ENCODE measurements at regions of chr17 and their contacts with region 1.

Region 1: GRCh38 chr17:63946440-63947367 is 14.6 kb upstream of the CD79B start:
- DNase-seq: peak; percentile 45 to 84
- ATAC-seq: peak; percentile 58 to 88; a peak in 5 of 6 replicates
- H3K4me3 ChIP-seq: no peak overlapping the region
- H3K27ac ChIP-seq: no peak overlapping the region
- H3K4me1 ChIP-seq: no peaks in the 10 kb centered on the region
- CTCF ChIP-seq: peak; percentile 77
- EP300 ChIP-seq: no peak
- POLR2A ChIP-seq: no peak
- RAD21 ChIP-seq: peak; percentile 51 to 57

Region 2: DNA sequence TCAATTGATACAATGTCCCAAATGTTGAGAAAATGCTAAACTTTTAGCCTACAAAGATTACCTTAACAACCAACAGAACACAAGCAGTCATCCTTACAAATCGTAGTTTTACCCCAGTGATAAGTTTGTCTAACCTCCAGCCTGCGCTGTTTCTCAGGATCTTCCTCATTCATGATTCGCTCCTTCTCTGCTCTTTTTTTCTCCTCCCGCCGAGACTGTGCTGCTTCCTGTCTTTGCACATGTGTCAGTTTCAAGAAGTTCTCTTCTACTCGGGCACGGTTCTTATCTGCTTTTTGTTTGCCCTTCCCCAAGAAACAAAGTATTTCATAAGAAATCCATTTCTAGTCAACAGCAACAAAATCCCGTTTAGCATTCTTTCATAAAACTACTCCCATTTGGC is 194.9 kb before region 1 on chr17:
- CTCF ChIA-PET with region 1: no interaction called
- POLR2A ChIA-PET with region 1: no interaction called
- DNase-seq: no peak
- ATAC-seq: no peak
- H3K4me3 ChIP-seq: no peak overlapping the region
- H3K27ac ChIP-seq: no peak overlapping the region
- H3K4me1 ChIP-seq: no peaks in the 10 kb centered on the region
- CTCF ChIP-seq: no peak
- EP300 ChIP-seq: no peak
- POLR2A ChIP-seq: no peak
- RAD21 ChIP-seq: no peak

Region 3: GRCh38 chr17:63904316-63904715 is 42.4 kb before region 1 on chr17:
- CTCF ChIA-PET with region 1: interaction called, 36 read pairs
- POLR2A ChIA-PET with region 1: no interaction called
- DNase-seq: no peak
- ATAC-seq: no peak
- H3K4me3 ChIP-seq: no peak overlapping the region
- H3K27ac ChIP-seq: no peak overlapping the region
- H3K4me1 ChIP-seq: no peaks in the 10 kb centered on the region; the same call in 2 of the 3 replicates
- CTCF ChIP-seq: no peak
- EP300 ChIP-seq: no peak
- POLR2A ChIP-seq: no peak
- RAD21 ChIP-seq: no peak

Region 4: GRCh38 chr17:63925645-63926044 is 21.1 kb before region 1 on chr17:
- CTCF ChIA-PET with region 1: interaction called, 105 read pairs
- POLR2A ChIA-PET with region 1: no interaction called
- DNase-seq: no peak
- ATAC-seq: no peak
- H3K4me3 ChIP-seq: no peak overlapping the region
- H3K27ac ChIP-seq: no peak overlapping the region
- H3K4me1 ChIP-seq: no peaks in the 10 kb centered on the region
- CTCF ChIP-seq: no peak
- EP300 ChIP-seq: no peak
- POLR2A ChIP-seq: no peak
- RAD21 ChIP-seq: no peak

Region 5: DNA sequence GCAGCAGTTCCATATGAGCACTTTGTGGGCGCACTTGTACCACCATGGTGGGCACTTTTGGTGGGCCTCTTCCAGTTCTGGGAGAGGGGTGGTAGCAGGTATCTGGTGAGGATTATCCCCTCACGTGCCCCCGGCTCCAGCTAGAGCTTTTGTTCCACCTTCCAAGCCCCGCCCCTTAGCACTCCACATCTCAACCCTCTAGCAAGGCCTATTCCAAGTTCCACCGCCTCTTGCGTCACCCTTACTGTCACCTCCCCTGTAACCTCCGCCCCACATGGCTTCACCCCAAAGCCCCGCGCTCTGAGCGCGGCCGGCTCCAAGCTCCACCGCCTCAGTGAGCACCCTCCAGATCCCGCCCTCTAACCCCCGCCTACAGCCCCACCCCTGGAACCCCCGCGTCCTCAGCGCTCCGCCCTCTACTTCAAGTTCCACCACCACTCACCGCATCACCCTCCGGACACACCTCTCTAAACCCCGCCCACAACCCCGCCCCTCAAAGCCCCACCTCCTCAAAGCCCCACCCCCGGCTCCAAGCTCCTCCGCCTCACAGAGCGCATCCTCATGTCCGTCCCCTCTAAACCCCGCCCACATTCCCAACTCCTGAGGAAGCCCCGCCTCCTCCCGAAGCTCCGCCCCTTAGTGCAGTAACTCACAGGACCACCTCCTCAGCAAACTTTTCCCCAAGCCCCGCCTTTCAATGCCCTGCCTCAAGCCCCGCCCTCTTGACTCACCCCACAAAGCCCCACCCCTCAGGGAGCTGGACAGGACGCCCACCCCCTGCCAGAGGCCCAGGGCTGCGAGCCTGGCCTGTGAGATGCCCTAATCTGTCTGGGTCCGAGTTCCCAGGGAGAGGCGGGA is 14.9 kb after region 1 on chr17:
- CTCF ChIA-PET with region 1: interaction called, 56 read pairs
- POLR2A ChIA-PET with region 1: no interaction called
- DNase-seq: peak; percentile 83 to 90
- ATAC-seq: peak; percentile 60 to 85
- H3K4me3 ChIP-seq: peak overlapping the region; percentile 43
- H3K27ac ChIP-seq: peak overlapping the region; percentile 23 to 66; a peak in 5 of 6 replicates
- H3K4me1 ChIP-seq: peaks cover 10% of the 10 kb centered on the region; the same call in 2 of the 3 replicates
- CTCF ChIP-seq: no peak
- EP300 ChIP-seq: no peak
- POLR2A ChIP-seq: no peak
- RAD21 ChIP-seq: no peak

Region 6: GRCh38 chr17:63974594-63975192 is 28.0 kb after region 1 on chr17:
- CTCF ChIA-PET with region 1: interaction called, 32 read pairs
- POLR2A ChIA-PET with region 1: no interaction called
- DNase-seq: peak in 1 of 2 experiments; percentile 63
- ATAC-seq: peak; percentile 61 to 74
- H3K4me3 ChIP-seq: no peak overlapping the region
- H3K27ac ChIP-seq: peak overlapping the region; percentile 49 to 68; a peak in 5 of 6 replicates
- H3K4me1 ChIP-seq: peaks cover 19% of the 10 kb centered on the region
- CTCF ChIP-seq: no peak
- EP300 ChIP-seq: no peak
- POLR2A ChIP-seq: no peak
- RAD21 ChIP-seq: no peak

Measured in A549 (cell line).